ENCODE measurements at regions of chr21 and their contacts with region 1.

Region 1: DNA sequence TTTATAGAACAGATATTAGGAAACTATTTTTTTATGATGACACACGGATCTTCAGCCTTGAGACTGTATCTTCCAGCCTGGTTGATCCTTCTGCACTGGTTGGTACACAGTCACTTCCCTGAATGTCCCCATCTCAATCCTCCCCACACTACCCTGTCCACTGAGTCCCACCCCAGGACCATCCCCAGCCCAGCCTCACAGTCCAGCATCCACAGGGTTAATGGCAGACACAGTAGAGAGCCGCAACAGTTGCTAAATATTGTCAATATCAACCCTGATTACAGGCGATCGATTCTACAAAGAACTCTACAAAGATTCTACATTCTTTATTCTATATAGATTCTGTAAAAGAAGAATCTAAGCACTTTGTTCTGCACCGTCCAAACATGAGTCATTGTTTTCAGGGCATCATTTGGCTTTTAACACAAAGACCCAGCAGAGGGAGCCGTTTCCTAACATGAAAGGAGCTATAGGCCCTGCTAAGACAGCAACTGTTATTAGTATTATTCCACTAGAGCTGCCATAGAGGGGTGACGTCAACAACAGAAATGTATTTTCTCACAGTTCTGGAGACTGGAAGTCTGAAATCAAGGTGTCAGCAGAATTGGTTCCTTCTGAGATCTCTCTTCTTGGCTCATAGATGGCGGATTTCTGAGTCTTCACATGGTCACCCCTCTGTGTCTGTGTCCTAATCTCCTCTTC is 30.1 kb upstream of the IFNAR2 start:
- DNase-seq: no peak
- ATAC-seq: peak; percentile 88
- H3K4me3 Mint-ChIP-seq: no peak overlapping the region
- H3K27ac Mint-ChIP-seq: peak overlapping the region; percentile 12
- H3K4me1 Mint-ChIP-seq: peaks cover 27% of the 10 kb centered on the region
- H3K27me3 Mint-ChIP-seq: peaks cover 10% of the 10 kb centered on the region
- CTCF ChIP-seq: no peak

Region 2: GRCh38 chr21:32653311-32653901 is 546.3 kb before region 1 on chr21:
- CTCF ChIA-PET with region 1: interaction called, 3 read pairs
- POLR2A ChIA-PET with region 1: no interaction called
- intact Hi-C with region 1: loop called (anchors 1 kb)
- DNase-seq: no peak
- ATAC-seq: peak; percentile 52
- H3K4me3 Mint-ChIP-seq: no peak overlapping the region
- H3K27ac Mint-ChIP-seq: no peak overlapping the region
- H3K4me1 Mint-ChIP-seq: no peaks in the 10 kb centered on the region
- H3K27me3 Mint-ChIP-seq: no peaks in the 10 kb centered on the region
- CTCF ChIP-seq: no peak

Region 3: GRCh38 chr21:32834916-32835235 is 364.8 kb before region 1 on chr21:
- CTCF ChIA-PET with region 1: interaction called, 14 read pairs
- POLR2A ChIA-PET with region 1: no interaction called
- intact Hi-C with region 1: loop called (anchors 2 kb)
- DNase-seq: no peak
- ATAC-seq: no peak
- H3K4me3 Mint-ChIP-seq: no peak overlapping the region
- H3K27ac Mint-ChIP-seq: no peak overlapping the region
- H3K4me1 Mint-ChIP-seq: no peaks in the 10 kb centered on the region
- H3K27me3 Mint-ChIP-seq: peaks cover 9% of the 10 kb centered on the region
- CTCF ChIP-seq: no peak

Region 4: DNA sequence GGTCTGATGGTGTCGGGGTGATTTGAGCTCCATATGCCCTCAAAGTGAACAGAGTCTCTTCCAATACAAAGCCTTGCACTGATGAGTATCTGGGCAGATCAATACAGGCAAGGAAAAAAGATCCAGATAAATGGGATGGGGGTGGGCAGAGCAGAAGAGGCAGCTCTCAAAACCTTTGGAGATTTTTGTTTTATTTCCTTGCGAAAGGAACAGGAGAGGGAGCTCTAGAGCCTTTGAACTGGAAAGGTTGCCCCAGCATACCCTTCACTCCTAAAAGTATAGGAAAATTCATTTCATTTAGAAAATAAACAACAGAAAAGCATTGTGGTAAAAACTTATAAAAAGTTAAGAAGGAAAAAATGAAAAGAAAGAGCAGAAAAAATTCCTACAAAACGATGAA is 205.4 kb before region 1 on chr21:
- CTCF ChIA-PET with region 1: interaction called, 6 read pairs
- POLR2A ChIA-PET with region 1: no interaction called
- intact Hi-C with region 1: loop called (anchors 2 kb)
- DNase-seq: no peak
- ATAC-seq: no peak
- H3K4me3 Mint-ChIP-seq: no peak overlapping the region
- H3K27ac Mint-ChIP-seq: no peak overlapping the region
- H3K4me1 Mint-ChIP-seq: no peaks in the 10 kb centered on the region
- H3K27me3 Mint-ChIP-seq: peaks cover 44% of the 10 kb centered on the region
- CTCF ChIP-seq: no peak

Region 5: DNA sequence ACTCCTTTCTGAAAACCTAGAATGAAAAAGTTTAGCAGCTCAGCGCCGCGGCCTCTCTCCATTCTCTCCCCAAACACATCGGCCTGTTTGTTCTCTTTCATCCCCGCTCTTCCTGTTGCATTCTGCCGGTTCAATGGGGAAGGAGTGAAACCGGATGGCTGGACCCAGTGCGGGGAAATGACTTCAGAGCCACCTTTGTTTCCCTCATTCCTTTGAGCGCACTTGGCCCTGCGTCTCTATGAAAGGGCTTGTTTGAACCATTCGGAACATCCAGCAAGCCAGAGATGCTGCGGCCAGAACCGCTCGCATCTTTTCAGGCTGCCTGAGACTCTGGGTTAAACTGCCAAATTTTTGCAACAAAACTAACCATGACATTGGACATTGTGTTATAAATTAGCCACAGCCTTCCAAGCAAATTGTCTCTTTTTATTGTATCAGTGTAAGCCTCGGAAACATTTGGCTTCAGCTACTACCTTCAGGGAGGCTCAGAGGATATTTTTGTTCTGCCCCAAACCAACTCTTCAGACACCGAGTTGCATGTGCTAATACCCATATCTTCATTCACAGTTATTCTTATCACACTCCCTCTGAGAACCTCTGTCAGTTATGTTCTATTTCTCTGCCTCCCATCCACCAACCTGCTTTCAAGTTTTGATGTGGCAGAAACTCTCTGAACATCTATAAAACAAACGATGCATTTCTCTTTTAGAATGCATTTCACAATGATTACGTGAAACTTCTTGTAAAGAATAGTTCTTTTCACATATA is 134.9 kb before region 1 on chr21:
- CTCF ChIA-PET with region 1: no interaction called
- POLR2A ChIA-PET with region 1: no interaction called
- intact Hi-C with region 1: no loop called
- DNase-seq: no peak
- ATAC-seq: no peak
- H3K4me3 Mint-ChIP-seq: no peak overlapping the region
- H3K27ac Mint-ChIP-seq: no peak overlapping the region
- H3K4me1 Mint-ChIP-seq: no peaks in the 10 kb centered on the region
- H3K27me3 Mint-ChIP-seq: peaks cover 71% of the 10 kb centered on the region
- CTCF ChIP-seq: no peak

Region 6: GRCh38 chr21:33121715-33122475 is 77.8 kb before region 1 on chr21:
- CTCF ChIA-PET with region 1: no interaction called
- POLR2A ChIA-PET with region 1: no interaction called
- intact Hi-C with region 1: no loop called
- DNase-seq: no peak
- ATAC-seq: no peak
- H3K4me3 Mint-ChIP-seq: no peak overlapping the region
- H3K27ac Mint-ChIP-seq: no peak overlapping the region
- H3K4me1 Mint-ChIP-seq: no peaks in the 10 kb centered on the region
- H3K27me3 Mint-ChIP-seq: peaks cover 28% of the 10 kb centered on the region
- CTCF ChIP-seq: no peak

Region 7: DNA sequence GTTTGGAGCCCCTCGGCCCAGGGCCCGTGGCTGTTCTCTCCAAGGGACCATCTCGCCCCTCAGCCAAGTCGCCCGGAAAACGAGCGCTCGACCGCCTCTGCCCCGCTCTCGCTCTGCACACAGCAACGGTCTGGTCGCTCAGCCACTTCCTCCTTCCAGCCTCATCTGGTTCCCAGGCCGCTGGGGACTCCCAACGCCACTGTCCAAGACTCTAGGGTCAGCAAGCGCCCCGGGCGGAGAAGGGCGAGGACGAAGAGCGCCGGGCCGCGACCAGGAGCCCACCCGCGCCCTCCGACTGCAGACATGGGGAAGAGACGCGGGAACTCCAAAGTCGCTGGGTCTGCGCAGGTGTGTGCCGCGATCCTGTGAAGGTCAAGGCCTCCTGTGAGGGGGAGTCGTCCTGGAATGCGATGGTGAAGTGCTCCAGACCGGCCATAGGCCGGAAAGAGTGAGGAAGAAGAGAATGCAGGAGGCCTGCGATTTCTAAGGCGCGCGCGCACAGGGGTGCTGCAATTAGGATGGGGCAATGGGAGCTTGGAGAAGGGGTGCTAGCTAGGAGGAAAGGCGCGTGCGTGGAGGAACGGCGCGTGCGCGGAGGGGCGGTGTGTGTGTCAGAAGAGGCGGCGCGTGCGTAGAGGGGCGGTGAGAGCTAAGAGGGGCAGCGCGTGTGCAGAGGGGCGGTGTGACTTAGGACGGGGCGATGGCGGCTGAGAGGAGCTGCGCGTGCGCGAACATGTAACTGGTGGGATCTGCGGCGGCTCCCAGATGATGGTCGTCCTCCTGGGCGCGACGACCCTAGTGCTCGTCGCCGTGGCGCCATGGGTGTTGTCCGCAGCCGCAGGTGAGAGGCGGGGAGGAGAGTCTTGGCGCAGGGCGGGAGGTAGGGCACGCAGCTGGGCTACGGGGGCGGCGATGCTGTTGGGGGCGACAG is 124.9 kb after region 1 on chr21 and contains the start of gene IFNAR1:
- CTCF ChIA-PET with region 1: interaction called, 6 read pairs
- POLR2A ChIA-PET with region 1: interaction called, 16 read pairs
- intact Hi-C with region 1: loop called (anchors 1 kb)
- DNase-seq: peak; percentile 97
- ATAC-seq: peak; percentile 80
- H3K4me3 Mint-ChIP-seq: no peak within 1 kb of the TSS
- H3K27ac Mint-ChIP-seq: no peak within 1 kb of the TSS
- H3K4me1 Mint-ChIP-seq: peaks cover 32% of the 10 kb centered on the region
- H3K27me3 Mint-ChIP-seq: no peaks in the 10 kb centered on the region
- CTCF ChIP-seq: no peak
- total RNA-seq, gene IFNAR1: 33.9 and 34.5 TPM in 2 replicates

Region 8: GRCh38 chr21:33441489-33442477 is 242.1 kb after region 1 on chr21:
- CTCF ChIA-PET with region 1: interaction called, 59 read pairs
- POLR2A ChIA-PET with region 1: interaction called, 19 read pairs
- intact Hi-C with region 1: loop called (anchors 1 kb)
- DNase-seq: peak; percentile 61
- ATAC-seq: peak; percentile 92
- H3K4me3 Mint-ChIP-seq: peak overlapping the region; percentile 58
- H3K27ac Mint-ChIP-seq: peak overlapping the region; percentile 92
- H3K4me1 Mint-ChIP-seq: peaks cover 73% of the 10 kb centered on the region
- H3K27me3 Mint-ChIP-seq: no peaks in the 10 kb centered on the region
- CTCF ChIP-seq: no peak

Region 9: GRCh38 chr21:33608559-33608958 is 408.9 kb after region 1 on chr21:
- CTCF ChIA-PET with region 1: interaction called, 17 read pairs
- POLR2A ChIA-PET with region 1: no interaction called
- intact Hi-C with region 1: loop called (anchors 2 kb)
- DNase-seq: no peak
- ATAC-seq: no peak
- H3K4me3 Mint-ChIP-seq: no peak overlapping the region
- H3K27ac Mint-ChIP-seq: no peak overlapping the region
- H3K4me1 Mint-ChIP-seq: no peaks in the 10 kb centered on the region
- H3K27me3 Mint-ChIP-seq: no peaks in the 10 kb centered on the region
- CTCF ChIP-seq: no peak